Activated naive CD4-positive, alpha-beta T cell treated with anti-CD3 and anti-CD28 coated beads for 36 hours (primary cell): ENCODE measurements at regions of chr5 and their contacts with region 1.

Region 1: GRCh38 chr5:64213531-64213930 is 47.9 kb downstream of the RNF180 start:
- DNase-seq: no peak
- H3K4me3 Mint-ChIP-seq: no peak overlapping the region
- H3K27ac Mint-ChIP-seq: no peak overlapping the region
- H3K4me1 Mint-ChIP-seq: no peaks in the 10 kb centered on the region
- H3K27me3 Mint-ChIP-seq: no peaks in the 10 kb centered on the region

Region 2: GRCh38 chr5:63854076-63854475 is 359.5 kb before region 1 on chr5:
- CTCF ChIA-PET with region 1: no interaction called
- intact Hi-C with region 1: no loop called
- DNase-seq: no peak
- H3K4me3 Mint-ChIP-seq: no peak overlapping the region
- H3K27ac Mint-ChIP-seq: no peak overlapping the region
- H3K4me1 Mint-ChIP-seq: no peaks in the 10 kb centered on the region
- H3K27me3 Mint-ChIP-seq: no peaks in the 10 kb centered on the region

Region 3: GRCh38 chr5:64180661-64181343 is 32.7 kb before region 1 on chr5:
- CTCF ChIA-PET with region 1: no interaction called
- intact Hi-C with region 1: loop called (anchors 1 kb)
- DNase-seq: no peak
- H3K4me3 Mint-ChIP-seq: no peak overlapping the region
- H3K27ac Mint-ChIP-seq: no peak overlapping the region
- H3K4me1 Mint-ChIP-seq: no peaks in the 10 kb centered on the region
- H3K27me3 Mint-ChIP-seq: peaks cover 3% of the 10 kb centered on the region

Region 4: DNA sequence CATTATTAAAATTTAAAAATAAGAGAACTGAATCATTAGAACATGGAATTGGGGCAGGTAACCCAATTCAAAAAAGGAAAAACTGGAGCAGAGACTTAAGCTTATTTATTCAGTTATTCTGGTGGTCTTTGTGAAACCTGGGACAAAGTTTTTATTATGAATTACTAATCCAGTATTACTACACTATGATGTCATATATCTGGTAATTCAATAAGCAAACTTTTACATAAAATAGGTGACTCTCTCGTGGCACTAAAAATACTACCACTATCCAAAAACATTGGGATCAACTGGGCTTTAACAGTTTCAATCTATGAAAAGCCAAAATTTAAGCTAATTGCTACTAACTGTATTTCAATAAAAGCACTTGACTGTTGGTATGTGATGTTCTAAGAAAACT is 157.2 kb after region 1 on chr5:
- CTCF ChIA-PET with region 1: no interaction called
- intact Hi-C with region 1: no loop called
- DNase-seq: no peak
- H3K4me3 Mint-ChIP-seq: no peak overlapping the region
- H3K27ac Mint-ChIP-seq: no peak overlapping the region
- H3K4me1 Mint-ChIP-seq: no peaks in the 10 kb centered on the region
- H3K27me3 Mint-ChIP-seq: no peaks in the 10 kb centered on the region